IMR-90 (cell line): ENCODE measurements at regions of chr17 and their contacts with region 1.

Region 1: DNA sequence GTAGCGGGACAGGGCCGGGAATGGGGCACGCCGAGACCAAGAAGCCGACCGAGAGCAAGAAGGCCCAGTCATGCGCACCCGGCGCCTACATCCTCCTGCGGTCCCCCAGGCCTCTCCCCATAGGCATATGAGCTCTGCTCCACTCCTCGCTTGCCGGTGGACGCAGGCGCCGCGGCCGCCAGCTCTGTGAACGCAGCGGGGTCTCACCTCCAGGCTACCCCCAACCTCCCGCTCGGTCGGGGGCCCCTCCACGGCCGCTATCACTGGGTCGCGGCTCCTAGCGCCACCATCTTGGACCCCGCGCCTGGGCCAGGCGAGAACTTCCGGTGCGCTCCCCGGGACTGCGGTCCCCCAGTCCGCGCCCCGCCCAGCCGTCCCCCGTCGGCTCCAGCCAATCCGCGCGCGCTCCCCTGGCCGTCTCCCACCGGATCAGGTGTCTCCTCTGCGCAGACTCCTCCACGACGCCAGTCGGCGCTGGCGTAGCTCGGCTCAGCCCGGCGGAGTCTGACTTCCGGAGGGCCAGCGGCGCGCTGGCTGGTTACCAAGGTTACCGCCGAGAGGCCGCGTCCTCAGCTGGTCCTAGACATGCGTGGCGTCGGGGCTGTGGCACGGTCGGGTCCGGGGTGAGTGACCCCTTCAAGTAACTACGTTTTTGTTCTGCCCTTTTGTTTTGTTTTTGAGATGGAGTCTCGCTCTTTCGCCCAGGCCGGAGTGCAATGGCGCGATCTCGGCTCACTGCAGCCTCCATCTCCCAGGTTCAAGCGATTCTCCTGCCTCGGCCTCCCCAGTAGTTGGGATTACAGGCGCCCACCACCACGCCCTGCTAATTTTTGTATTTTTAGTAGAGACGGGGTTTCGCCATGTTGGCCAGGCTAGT is at the start of gene ZNF594:
- DNase-seq: peak; percentile 94
- ATAC-seq: peak; percentile 100
- H3K4me3 ChIP-seq: peak within 1 kb of the TSS; percentile 90
- H3K27ac ChIP-seq: peak within 1 kb of the TSS; percentile 70
- H3K4me1 ChIP-seq: 0 out of 2 replicates have a peak, but pooled peaks cover 2% of the 10 kb centered on the region
- H3K27me3 ChIP-seq: no peaks in the 10 kb centered on the region
- CTCF ChIP-seq: peak; percentile 82
- POLR2A ChIP-seq: peak; percentile 87
- RAD21 ChIP-seq: no peak
- total RNA-seq, gene ZNF594: 7.2 and 8.1 TPM in 2 replicates

Region 2: DNA sequence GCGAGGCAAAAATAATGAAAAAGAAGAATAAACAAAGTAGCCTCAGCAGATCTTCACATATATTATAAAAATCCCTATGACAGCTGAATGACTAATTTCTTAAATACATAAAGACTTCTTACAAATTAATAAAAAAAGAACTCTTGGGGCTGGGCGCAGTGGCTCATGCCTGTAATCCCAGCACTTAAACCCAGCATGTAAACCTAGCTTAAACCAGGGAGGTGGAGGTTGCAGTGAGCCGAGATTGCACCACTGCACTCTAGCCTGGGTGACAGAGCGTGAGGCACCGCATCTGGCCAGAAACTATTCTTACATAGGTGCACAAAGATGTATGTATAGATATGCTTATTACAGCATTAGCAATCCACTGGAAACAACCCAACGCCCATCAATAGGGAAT is 1487.5 kb after region 1 on chr17:
- CTCF ChIA-PET with region 1: no interaction called
- POLR2A ChIA-PET with region 1: interaction called, 12 read pairs
- dilution Hi-C with region 1: no loop called
- in situ Hi-C with region 1: no loop called
- intact Hi-C with region 1: no loop called
- DNase-seq: no peak
- ATAC-seq: no peak
- H3K4me3 ChIP-seq: no peak overlapping the region
- H3K27ac ChIP-seq: no peak overlapping the region
- H3K4me1 ChIP-seq: no peaks in the 10 kb centered on the region
- H3K27me3 ChIP-seq: peaks cover 29% of the 10 kb centered on the region
- CTCF ChIP-seq: no peak
- POLR2A ChIP-seq: no peak
- RAD21 ChIP-seq: no peak